Activated T-helper 2 cell treated with anti-CD3 and anti-CD28 coated beads, Interferon-gamma antibody, Interleukin-2, Interleukin-4, amounts not matched to agents 10 μg/mL and 5 μg/mL and 100 μg/mL, durations not matched to agents 14 hours and 24 hours and 36 hours (primary cell): ENCODE measurements at regions of chr19 and their contacts with region 1.

Region 1: DNA sequence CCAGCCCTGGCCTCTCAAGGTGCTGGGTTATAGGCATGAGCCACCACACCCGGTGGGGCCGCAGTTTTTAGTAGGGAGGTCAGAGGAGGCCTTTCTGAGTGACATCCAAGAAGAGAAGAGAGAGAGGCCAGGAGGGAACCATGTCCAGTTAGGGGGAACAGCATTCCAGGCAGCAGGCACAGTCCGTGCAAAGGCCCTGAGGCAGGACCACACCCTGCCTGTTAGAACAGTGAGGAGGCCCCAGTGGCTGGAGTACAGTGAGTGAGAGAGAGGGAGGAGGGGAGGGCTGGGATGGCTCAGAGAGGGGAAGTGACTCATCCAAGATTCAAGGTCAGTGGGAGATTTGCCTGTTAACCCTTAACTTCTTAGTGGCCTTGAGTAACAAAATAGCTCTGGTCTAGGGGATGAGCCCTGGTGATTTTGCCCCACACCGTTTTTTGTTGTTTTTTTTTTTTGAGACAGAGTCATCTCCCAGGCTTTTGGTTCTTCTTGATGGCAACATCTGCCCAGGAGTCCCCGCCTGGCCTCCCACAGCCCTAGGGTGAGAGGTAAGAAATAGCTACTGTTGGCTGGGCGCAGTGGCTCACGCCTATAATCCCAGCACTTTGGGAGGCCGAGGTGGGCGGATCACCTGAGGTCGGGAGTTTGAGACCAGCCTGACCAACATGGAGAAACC is 2.7 kb upstream of the PLIN3 start:
- DNase-seq: no peak
- H3K4me3 Mint-ChIP-seq: no peak overlapping the region
- H3K27ac Mint-ChIP-seq: no peak overlapping the region
- H3K4me1 Mint-ChIP-seq: peaks cover 17% of the 10 kb centered on the region
- H3K27me3 Mint-ChIP-seq: no peaks in the 10 kb centered on the region

Region 2: DNA sequence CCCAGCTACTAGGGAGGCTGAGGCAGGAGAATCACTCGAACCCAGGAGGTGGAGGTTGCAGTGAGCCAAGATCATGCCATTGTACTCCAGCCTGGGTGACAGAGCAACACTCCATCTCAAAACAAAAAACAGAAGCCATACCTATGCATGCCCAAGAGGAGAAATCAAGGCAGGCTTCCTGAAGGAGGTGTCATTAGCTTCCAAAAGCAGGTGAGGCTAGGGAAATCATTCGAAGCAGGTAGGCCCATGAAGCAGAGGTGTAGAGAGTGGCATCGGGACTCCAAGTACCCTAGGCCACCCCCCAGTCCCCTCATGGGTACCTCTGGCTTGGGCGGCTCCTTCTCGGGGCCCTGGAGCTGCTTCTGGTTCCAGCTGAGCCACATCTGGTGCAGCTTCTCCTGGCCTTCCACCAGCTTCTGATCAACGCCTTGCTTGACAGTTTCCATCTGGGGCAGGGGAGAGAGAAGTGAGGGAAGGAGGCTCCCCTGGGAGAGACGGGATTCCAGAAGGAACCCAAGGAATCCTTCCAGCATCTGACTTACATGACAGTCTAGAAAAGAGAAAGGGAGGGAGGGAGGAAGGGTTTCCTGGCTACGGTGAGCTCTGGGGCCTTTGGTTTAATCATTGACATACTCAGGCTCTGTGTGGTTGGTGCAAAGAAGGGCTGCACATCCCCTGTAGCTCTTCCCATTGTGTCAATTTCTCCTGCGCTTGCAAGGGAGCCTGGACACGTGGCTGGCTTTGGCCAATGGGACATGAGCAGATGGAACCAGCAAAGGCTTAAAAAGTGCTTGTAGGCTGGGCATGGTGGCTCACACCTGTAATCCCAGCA is 25.6 kb before region 1 on chr19:
- intact Hi-C with region 1: no loop called
- DNase-seq: no peak
- H3K4me3 Mint-ChIP-seq: no peak overlapping the region
- H3K27ac Mint-ChIP-seq: no peak overlapping the region
- H3K4me1 Mint-ChIP-seq: peaks cover 8% of the 10 kb centered on the region
- H3K27me3 Mint-ChIP-seq: no peaks in the 10 kb centered on the region

Region 3: DNA sequence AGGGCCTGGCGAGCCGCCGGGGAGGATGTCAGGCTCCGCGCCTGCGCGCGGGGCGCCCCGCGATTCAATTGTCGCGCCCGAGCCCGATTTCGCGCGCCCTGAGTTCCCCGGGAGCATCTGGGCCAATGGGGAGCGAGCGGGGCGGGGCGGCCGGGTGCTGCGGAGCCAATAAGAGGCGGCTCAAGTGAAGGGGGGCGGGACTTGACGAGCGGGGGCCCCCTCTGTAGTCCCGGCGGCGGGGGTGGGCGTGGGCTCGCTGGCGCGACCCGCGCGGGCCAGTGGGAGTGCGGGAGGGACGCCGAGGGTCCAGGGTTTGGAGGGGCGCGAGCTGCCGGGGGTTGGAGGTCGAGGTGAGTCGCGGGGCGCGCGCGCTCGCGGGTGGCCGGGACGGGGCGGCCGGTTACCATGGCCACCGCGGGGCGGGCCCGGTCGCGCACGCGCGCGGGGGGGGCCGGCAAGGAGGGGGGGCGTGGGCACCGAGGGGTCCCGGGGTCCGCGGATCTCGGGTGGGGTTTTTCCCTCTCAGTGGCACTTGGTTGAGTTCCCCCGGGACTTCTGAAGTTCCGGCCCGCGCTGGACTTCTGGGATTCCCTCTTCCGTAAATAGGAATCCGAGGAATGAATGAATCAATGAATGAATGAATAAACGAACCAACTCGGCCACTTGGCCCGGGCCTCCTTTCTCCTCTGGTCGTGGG is 39.9 kb after region 1 on chr19:
- intact Hi-C with region 1: loop called (anchors 2 kb)
- DNase-seq: peak; percentile 94
- H3K4me3 Mint-ChIP-seq: peak overlapping the region; percentile 88
- H3K27ac Mint-ChIP-seq: peak overlapping the region; percentile 84
- H3K4me1 Mint-ChIP-seq: peaks cover 39% of the 10 kb centered on the region
- H3K27me3 Mint-ChIP-seq: no peaks in the 10 kb centered on the region

Region 4: GRCh38 chr19:4968462-4969291 is 98.5 kb after region 1 on chr19 and contains the start of gene KDM4B:
- intact Hi-C with region 1: loop called (anchors 5 kb)
- DNase-seq: peak; percentile 99
- H3K4me3 Mint-ChIP-seq: peak within 1 kb of the TSS; percentile 96
- H3K27ac Mint-ChIP-seq: peak within 1 kb of the TSS; percentile 91
- H3K4me1 Mint-ChIP-seq: peaks cover 38% of the 10 kb centered on the region
- H3K27me3 Mint-ChIP-seq: no peaks in the 10 kb centered on the region
- total RNA-seq, gene KDM4B: 51.7 and 54.3 TPM in 2 replicates

Region 5: DNA sequence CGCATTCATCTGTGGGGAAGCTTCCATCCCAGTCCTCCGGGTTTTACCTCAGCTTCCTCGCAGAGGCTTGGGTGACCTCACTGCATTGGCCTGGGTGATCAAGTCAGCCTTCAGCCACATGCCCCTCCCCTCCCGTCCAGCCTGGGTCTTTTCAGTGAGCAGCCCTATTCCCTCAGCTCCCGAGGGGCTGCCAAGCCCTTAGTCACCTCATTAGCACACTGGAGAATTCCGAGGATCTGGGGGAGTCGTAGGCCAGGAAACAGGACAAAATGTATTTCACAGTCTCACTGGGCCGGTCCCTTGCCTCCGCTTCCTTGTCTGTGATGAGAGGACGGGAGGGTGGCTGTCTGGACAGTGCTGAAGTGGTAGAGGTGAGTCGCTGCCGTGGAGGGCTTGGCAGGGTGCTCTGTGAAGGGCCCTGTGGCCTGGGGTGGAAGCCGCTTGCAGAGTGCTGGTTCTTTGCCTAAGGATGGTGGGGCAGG is 118.6 kb after region 1 on chr19:
- intact Hi-C with region 1: no loop called
- DNase-seq: no peak
- H3K4me3 Mint-ChIP-seq: no peak overlapping the region
- H3K27ac Mint-ChIP-seq: no peak overlapping the region
- H3K4me1 Mint-ChIP-seq: peaks cover 4% of the 10 kb centered on the region
- H3K27me3 Mint-ChIP-seq: no peaks in the 10 kb centered on the region

Region 6: DNA sequence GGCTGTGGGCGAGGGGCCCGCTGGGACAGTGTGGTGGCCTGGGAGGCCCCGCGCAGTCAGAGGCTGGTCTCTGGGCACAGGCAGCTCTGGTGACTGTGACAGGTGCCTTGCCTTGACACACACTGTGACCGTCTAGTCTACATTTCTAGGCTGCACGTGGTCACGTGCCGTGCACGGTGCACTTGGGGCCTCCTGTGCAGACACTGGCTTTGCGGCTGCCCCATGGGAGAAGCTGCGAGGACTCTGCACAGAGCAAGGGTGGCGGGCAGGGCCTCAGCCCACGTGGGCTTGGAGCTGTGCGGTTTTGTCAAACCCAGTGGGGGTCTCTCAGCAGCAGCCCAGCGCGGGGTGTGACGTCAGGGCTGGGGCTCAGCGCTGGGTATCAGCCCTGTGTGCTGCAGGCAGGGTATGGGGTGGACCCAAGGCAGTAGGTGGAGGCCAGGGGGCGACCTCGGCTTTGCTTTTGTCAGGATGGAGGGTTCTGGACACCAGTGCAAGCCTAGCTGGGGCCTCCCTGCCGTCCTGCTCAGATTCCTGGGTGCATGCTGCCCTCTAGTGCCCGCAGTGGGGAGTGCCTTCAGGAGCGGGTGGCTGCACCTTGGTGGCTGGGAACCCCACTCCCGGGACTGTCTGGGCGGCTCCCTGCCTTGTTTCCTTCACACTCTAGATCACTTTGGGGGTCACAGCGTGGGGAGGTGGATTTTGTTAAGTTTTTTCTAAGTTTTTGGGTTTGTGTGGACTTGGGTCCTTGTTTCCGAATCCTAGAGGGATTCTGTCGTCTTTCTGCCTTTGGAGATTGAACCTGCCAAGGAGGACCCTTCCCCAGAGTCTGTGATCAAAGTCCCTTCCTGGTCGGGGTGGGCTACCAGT is 161.3 kb after region 1 on chr19:
- intact Hi-C with region 1: loop called (anchors 2 kb)
- DNase-seq: peak; percentile 66
- H3K4me3 Mint-ChIP-seq: no peak overlapping the region
- H3K27ac Mint-ChIP-seq: no peak overlapping the region
- H3K4me1 Mint-ChIP-seq: no peaks in the 10 kb centered on the region
- H3K27me3 Mint-ChIP-seq: no peaks in the 10 kb centered on the region